Activated CD4-positive, alpha-beta memory T cell treated with anti-CD3 and anti-CD28 coated beads for 36 hours (primary cell): ENCODE measurements at regions of chr3 and their contacts with region 1.

Region 1: GRCh38 chr3:49539659-49540560 is 14.4 kb upstream of the BSN start:
- DNase-seq: peak; percentile 94
- H3K4me3 Mint-ChIP-seq: peak overlapping the region; percentile 69
- H3K27ac Mint-ChIP-seq: no peak overlapping the region
- H3K4me1 Mint-ChIP-seq: peaks cover 3% of the 10 kb centered on the region
- H3K27me3 Mint-ChIP-seq: peaks cover 5% of the 10 kb centered on the region

Region 2: DNA sequence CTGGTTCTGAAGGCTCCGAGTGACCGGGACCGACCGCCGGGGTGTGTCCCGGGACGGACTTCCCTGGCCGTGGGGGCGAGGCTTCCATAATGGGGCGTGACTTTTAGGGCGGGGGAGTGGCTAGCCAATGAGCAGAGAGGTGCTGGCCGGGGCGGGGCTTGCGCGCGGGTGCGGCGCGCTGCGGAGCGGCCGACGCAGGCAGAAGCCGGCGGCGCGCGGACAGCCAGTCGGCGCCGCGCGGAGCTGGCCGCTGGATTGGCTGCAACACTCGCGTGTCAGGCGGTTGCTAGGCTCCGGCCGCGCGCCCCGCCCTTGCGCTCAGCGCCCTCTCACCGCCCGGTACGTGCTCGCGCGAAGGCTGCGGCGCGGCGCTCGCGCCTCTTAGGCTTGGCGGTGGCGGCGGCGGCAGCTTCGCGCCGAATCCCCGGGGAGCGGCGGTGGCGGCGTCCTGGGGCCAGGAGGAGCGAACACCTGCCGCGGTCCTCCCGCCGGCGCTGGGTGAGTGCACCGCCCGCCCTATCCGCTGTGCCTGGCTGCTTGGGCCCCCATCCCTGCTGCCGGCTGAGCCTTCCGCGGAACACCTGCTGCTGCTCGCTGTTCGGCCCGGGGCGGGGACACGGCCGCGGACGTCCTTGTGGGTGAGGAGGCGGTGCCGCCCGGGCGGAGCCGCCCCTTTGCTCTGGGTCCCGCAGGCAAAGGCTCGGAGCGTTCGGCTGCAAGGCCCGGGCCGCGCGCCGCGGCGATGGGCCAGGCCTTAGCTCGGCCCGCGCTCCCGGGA is 69.8 kb before region 1 on chr3 and contains the start of gene DAG1:
- CTCF ChIA-PET with region 1: interaction called, 10 read pairs
- POLR2A ChIA-PET with region 1: interaction called, 4 read pairs
- intact Hi-C with region 1: no loop called
- DNase-seq: peak; percentile 97
- H3K4me3 Mint-ChIP-seq: peak within 1 kb of the TSS; percentile 91
- H3K27ac Mint-ChIP-seq: peak within 1 kb of the TSS; percentile 87
- H3K4me1 Mint-ChIP-seq: peaks cover 21% of the 10 kb centered on the region
- H3K27me3 Mint-ChIP-seq: no peaks in the 10 kb centered on the region
- total RNA-seq, gene DAG1: 9.4 to 9.6 TPM

Region 3: GRCh38 chr3:49553692-49554632 is 14.1 kb after region 1 on chr3 and contains the start of gene BSN:
- CTCF ChIA-PET with region 1: interaction called, 43 read pairs
- POLR2A ChIA-PET with region 1: interaction called, 6 read pairs
- intact Hi-C with region 1: loop called (anchors 1 kb)
- DNase-seq: peak; percentile 92
- H3K4me3 Mint-ChIP-seq: peak within 1 kb of the TSS; percentile 79
- H3K27ac Mint-ChIP-seq: no peak within 1 kb of the TSS
- H3K4me1 Mint-ChIP-seq: peaks cover 21% of the 10 kb centered on the region
- H3K27me3 Mint-ChIP-seq: peaks cover 48% of the 10 kb centered on the region
- total RNA-seq, gene BSN: 0.05 to 0.07 TPM

Region 4: DNA sequence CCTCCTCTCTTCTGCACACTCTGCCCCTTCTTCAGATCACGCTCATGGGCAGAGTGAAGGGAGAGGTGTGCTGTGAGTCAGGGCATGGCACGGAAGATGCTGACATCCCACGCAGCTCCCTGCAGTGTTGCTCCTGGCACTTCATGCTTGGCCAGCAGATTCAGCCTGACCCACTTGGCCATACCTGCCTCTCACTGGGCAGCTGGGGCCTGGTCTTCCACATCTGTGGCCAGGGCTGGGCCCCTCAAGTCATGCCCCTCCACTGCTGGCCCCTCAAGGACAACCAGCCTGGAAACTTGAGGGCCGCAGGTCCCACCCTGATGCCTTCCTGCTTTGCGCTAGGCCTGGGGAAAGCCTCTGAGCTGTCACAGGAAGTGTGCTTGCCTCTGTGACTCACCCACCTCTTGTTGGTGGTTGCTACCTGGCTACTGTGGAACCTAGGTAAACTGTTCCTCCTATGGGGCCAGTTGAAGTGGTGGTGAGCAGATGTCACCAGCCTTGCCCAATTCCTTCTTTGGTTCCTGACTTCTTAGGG is 63.0 kb after region 1 on chr3:
- CTCF ChIA-PET with region 1: interaction called, 11 read pairs
- POLR2A ChIA-PET with region 1: no interaction called
- intact Hi-C with region 1: no loop called
- DNase-seq: peak; percentile 78
- H3K4me3 Mint-ChIP-seq: no peak overlapping the region
- H3K27ac Mint-ChIP-seq: peak overlapping the region; percentile 66
- H3K4me1 Mint-ChIP-seq: peaks cover 20% of the 10 kb centered on the region
- H3K27me3 Mint-ChIP-seq: no peaks in the 10 kb centered on the region

Region 5: GRCh38 chr3:49666592-49666991 is 126.7 kb after region 1 on chr3:
- CTCF ChIA-PET with region 1: interaction called, 308 read pairs
- POLR2A ChIA-PET with region 1: interaction called, 6 read pairs
- intact Hi-C with region 1: loop called (anchors 1 kb)
- DNase-seq: no peak
- H3K4me3 Mint-ChIP-seq: no peak overlapping the region
- H3K27ac Mint-ChIP-seq: no peak overlapping the region
- H3K4me1 Mint-ChIP-seq: no peaks in the 10 kb centered on the region
- H3K27me3 Mint-ChIP-seq: no peaks in the 10 kb centered on the region

Region 6: GRCh38 chr3:49703443-49703927 is 163.6 kb after region 1 on chr3:
- CTCF ChIA-PET with region 1: interaction called, 10 read pairs
- POLR2A ChIA-PET with region 1: no interaction called
- intact Hi-C with region 1: no loop called
- DNase-seq: peak; percentile 79
- H3K4me3 Mint-ChIP-seq: no peak overlapping the region
- H3K27ac Mint-ChIP-seq: no peak overlapping the region
- H3K4me1 Mint-ChIP-seq: no peaks in the 10 kb centered on the region
- H3K27me3 Mint-ChIP-seq: no peaks in the 10 kb centered on the region

Region 7: GRCh38 chr3:49839193-49839809 is 299.4 kb after region 1 on chr3:
- CTCF ChIA-PET with region 1: interaction called, 22 read pairs
- POLR2A ChIA-PET with region 1: no interaction called
- intact Hi-C with region 1: no loop called
- DNase-seq: peak; percentile 85
- H3K4me3 Mint-ChIP-seq: no peak overlapping the region
- H3K27ac Mint-ChIP-seq: no peak overlapping the region
- H3K4me1 Mint-ChIP-seq: peaks cover 1% of the 10 kb centered on the region
- H3K27me3 Mint-ChIP-seq: no peaks in the 10 kb centered on the region